Posterior cingulate gyrus (tissue), 11 donors: ENCODE measurements at regions of chr5 and their contacts with region 1.

Region 1: DNA sequence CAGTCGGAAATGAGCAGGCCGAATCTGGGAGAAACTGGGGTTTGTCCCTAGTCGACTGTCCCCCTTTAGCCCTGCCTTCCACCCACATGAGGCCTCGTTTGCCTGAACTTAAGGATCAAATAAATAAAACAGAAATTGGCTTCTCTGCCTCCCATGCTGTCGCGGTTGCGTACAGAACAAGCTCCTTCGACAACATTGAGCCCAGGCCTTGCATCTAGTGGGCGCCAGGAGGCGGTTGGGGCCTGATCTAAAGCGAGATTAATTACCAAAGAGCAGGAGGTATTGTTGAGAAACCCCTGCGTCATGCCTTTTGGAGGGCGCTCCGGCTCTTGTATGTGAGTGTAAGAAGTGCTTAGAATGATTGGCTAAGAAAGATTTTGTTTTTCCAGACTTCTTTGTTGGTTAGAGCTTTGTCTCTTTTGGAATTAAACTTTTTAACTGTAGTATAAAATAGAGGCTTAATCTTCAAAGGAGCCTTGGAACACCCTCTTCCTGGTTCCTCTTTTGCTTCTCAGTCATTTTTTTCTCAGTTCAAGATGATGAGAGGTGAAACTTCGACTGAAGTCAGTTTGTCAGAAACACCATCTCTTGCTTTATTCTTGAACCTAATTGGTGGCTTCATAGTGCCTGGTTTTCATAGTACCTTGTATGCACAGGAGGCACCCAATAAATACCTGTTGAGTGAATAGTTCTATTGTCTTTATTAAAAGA is 827 bp downstream of the ATP6V0E1 start:
- DNase-seq: peak; percentile 24 to 91 (median 37)

Region 2: DNA sequence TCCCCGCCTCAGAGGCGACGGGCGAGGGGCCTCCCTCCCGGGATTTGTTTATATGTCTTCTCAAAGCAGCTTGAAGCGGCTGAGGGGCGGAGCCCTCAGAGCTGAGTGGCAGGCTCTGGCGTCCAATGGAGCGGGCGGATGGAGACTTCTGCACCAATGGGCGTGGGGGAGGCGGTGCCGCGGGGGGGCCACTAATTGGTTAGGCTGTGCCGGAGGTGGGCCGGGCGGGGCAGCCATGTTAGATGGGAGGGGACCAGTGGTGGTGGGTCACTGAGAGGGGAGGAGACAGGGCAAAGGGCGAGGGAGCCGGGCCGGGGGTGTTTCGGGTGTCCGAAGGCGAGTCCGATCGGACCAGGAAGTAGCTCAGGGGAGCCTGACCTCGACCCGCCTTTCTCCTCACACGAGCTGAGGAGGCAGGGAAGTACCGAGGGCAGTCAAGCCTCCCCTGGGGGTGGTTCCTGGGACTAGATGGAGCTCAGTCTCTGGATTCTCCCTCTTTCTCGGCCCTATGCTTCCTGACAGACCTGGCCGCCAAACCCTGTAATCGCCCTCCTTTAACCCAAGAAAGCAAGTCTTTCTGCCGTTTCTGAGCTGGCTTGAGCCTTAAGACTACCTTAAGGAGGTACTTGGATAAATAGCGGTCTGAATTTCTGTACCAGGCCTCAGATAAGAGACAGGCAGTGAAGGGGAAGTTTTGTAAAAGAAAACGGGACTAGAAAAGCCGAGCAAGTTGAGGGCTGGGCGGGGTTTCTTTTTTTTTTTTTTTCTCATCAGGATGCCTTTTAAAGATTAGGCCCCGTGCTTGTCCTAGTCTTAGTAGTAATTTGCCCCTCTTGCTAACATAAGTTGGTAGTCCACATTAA is 72.9 kb after region 1 on chr5:
- intact Hi-C with region 1: loop called (anchors 5 kb)
- DNase-seq: peak; percentile 96 to 100 (median 98)

Region 3: DNA sequence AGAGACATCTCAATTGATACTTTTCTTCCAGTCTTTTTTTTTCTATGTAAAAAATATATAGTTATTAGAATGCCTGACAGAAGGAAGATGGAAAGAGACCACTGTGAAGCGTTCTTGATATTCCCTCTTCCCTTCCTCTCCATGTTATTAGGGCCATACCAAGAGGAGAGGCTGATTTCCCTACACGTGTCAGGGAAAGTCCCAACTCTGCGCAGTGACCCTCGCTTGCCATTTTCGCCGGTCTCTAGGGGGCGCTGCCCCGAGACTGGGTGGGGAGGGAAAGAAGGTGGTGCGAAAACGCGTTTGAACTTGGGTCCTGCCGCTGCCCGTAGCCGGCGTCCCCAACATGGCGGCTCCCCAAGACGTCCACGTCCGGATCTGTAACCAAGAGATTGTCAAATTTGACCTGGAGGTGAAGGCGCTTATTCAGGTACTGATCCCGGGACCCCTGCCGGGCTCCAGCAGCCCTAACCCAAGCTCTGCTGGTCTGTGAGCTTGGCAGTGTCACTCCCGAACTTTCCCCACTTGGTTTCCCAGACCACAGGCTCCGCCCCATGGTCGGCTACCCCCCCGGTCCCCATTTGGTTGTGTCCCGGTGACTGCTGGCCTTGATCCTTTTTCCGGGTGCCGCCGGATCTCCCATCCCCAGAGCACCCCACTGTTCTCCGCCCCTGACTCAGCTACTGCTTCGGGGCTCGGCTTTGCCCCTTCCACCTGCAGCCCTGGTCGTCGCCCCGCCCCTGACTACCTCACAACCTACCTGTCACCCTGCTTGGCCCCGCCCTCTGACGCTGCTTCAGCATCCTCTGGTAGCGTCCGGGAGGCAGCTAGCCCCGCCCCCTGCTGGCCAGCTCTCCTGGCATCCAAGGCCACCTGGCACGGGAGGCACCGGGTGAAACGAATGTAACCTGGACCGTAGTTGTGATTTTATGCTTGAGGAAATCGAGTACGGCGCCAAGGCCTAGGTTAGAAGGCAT is 160.1 kb after region 1 on chr5 and contains the start of gene BNIP1:
- intact Hi-C with region 1: loop called (anchors 2 kb)
- DNase-seq: peak; percentile 85 to 98 (median 92)

Region 4: DNA sequence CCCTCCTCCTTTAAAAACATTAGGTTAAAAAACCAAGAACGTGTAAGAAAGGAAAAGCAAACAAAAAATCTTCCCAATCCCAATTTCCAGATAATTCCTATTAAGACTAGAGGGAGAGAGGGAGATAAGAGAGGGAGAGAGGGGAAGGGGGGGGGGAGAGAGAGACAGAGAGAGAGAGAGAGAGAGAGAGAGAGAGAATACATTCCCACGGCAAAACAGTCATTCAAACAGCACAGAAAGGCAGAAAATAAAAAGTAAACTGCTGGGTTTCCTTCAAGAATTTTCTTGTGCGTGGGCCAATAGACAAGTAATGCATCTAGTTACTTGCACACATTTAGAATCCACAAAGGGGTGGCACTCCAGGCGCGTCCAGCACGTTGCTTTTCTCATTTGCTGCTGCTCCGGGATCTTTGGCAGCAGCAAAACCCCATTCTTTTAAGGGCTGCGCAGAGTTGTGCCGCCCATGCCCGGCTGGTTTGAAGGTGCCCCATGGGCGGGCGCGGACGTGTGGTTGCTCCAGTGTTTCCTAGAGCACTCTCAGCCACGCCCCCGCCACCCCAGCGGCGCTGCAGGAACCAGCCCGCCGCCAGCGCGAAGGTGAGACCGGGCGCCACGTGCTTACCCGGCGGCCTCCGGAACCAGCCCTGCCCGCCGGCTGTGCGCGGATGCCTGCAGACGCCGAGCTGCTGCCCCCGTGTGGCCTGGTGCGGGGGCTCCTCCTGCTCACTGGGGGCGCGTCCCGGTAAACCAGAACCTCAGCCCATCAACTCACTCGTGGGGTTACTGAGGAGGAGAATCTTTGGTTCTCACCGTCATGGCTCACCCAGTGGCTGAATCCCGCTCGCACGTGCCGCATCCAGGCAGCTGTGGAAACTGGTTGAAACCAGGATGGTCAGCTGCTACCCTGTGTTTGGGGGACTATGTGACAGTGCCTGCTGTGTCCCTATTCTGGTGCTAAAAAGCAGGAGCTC is 299.2 kb after region 1 on chr5:
- intact Hi-C with region 1: loop called (anchors 5 kb)
- DNase-seq: peak; percentile 43 to 95 (median 69)